OCI-LY7 (cell line): ENCODE measurements at regions of chr15 and their contacts with region 1.

Region 1: DNA sequence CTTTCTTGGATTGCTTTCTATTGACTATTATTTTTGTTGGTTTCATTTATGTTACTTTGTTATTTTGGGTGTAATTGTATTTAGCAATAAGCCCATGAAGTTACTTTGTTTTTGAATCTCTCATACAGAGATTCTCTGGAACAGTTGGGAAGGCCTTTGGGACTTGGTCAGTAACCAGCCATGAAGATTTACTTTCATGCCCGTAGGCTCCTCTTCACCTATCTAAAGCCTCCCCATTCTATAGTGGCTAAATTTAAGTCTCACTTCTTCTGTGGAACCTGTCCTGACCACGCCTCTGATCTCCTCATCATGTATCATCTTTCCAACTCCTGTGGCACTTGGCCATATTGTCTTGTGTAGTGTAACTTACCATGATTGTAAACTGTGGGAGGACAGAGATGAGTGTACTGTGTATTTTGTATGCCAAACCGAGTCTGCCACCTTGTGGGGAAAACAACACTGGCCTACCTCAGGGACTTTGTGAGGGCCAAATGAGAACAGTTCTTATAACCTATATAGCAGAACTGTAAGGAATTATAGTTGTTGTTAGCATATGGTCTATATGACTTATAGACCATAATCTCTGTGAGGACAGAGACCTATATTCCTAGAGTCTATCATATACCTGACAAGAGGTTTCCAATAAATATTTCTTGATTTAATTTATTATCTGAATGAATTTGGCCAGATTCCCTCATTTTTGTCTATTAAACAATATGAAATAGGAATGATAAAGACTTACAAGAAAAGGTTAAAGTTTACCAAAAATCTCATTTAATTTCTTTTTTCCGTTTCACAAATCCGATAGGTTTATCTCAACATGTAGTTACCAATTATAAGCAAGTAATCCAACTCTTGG is 75.0 kb downstream of the STARD9 start:
- DNase-seq: peak; percentile 80
- H3K4me3 ChIP-seq: no peak overlapping the region
- H3K27ac ChIP-seq: no peak overlapping the region
- H3K4me1 ChIP-seq: peaks cover 13% of the 10 kb centered on the region
- CTCF ChIP-seq: peak; percentile 97

Region 2: GRCh38 chr15:42474827-42475226 is 175.6 kb before region 1 on chr15:
- CTCF ChIA-PET with region 1: no interaction called
- POLR2A ChIA-PET with region 1: no interaction called
- intact Hi-C with region 1: loop called (anchors 5 kb)
- DNase-seq: no peak
- H3K4me3 ChIP-seq: no peak overlapping the region
- H3K27ac ChIP-seq: no peak overlapping the region
- H3K4me1 ChIP-seq: peaks cover 13% of the 10 kb centered on the region
- CTCF ChIP-seq: no peak

Region 3: DNA sequence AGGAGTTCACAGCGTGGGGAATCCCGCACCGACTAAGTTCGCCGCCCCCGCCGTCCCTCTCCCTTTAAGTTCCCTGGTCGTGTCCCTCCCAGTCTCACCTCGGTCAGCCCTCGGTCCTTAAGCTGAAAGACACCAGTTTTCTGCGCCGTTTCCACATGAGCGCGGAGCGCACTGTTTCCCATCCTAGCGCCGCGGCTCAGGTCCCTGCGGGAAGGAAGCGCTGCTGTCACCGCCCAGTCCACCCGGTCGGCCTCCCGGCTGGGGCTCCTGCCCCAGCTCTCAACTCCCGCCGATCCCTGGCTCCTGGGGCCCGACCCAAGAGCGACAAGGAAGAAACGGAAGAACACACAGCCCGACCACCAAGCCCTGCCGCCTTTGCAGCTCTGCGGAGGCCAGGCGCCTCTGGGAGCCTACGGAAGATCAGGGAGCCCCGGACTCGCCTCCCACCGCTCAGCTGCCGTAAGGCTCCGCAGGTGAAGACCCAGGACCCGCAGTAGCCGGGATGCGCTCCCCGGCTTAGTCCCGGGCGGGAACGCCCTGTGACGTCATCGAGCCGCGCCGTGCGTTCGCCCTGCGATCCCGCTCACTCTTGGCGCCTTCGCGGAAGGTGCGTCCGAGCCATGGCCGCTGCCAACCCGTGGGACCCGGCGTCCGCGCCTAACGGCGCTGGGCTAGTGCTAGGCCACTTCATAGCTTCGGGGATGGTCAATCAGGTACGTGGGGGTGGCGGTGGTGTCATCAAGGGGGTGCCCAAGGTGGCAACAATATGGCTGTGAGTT is 102.0 kb before region 1 on chr15 and contains the starts of genes HAUS2 and LRRC57:
- CTCF ChIA-PET with region 1: no interaction called
- POLR2A ChIA-PET with region 1: interaction called, 3 read pairs
- intact Hi-C with region 1: loop called (anchors 10 kb)
- DNase-seq: peak; percentile 90
- H3K4me3 ChIP-seq: peak within 1 kb of the TSS; percentile 98
- H3K27ac ChIP-seq: peak within 1 kb of the TSS; percentile 71
- H3K4me1 ChIP-seq: peaks cover 45% of the 10 kb centered on the region
- CTCF ChIP-seq: no peak
- total RNA-seq, gene HAUS2: 44.9 and 50.4 TPM in 2 replicates
- total RNA-seq, gene LRRC57: 17.9 and 18.5 TPM in 2 replicates

Region 4: DNA sequence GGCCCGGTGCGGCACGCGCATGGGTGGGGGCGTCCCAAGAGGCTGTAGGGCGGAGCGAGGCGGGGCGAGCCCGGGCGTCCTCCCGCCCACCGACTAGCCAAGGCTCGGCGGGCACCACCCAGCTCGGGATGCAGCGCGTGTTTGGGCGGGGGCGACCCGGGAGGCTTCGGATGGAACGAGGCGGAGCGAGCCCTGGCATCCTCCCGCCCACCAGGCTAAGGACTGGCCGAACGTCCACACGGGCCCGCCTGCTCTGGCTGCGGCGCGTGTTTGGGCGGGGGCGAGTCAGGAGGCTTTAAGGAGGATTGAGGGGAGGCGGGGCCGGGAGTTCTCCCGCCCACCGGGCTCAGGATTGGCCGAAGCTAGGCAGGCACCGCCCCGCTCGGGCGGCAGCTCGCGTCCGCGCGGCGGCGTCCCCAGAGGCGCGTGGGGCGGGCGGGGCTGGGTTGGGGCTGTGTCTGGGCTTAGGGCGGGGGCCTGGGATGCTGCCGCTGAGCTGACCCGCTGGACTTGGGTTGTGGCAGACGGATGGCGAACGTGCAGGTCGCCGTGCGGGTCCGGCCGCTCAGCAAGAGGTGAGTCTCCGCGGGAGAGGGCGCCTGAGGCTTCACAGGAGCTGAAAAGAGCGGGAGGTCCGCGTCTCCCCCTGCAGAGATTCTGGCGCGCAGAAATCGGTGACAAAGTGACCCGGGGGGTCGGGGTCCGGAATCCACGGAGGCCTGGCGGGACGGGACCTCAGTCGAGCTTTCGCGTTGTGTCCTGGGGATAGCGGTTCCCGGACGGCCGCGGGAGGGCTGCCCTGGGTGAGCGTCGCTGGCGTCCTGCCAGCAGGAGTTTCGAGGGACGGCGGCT is 75.0 kb before region 1 on chr15 and contains the start of gene STARD9:
- CTCF ChIA-PET with region 1: no interaction called
- POLR2A ChIA-PET with region 1: no interaction called
- intact Hi-C with region 1: loop called (anchors 5 kb)
- DNase-seq: peak; percentile 96
- H3K4me3 ChIP-seq: peak within 1 kb of the TSS; percentile 79
- H3K27ac ChIP-seq: peak within 1 kb of the TSS; percentile 1
- H3K4me1 ChIP-seq: peaks cover 33% of the 10 kb centered on the region
- CTCF ChIP-seq: no peak
- total RNA-seq, gene STARD9: 15.3 and 15.4 TPM in 2 replicates

Region 5: DNA sequence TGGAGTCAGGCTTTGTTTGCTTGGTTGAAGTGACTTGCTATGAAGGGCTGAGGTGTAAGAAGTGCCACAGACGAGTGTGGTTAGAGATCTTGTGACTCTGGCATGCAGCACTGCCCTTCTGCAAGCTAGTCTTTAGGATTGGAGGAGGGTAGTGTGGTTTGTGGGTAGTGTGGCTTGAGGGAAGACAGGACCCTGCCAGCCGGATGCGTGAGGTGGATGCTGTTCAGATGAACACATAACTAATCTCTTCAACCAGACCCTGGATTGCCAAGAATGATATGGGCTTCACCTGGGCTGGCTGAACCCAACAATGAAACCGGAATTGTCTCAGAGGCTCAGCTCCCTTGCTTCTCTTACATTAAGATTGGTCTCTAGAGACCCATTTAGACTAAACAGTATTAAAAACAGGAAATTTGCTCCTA is 42.3 kb before region 1 on chr15:
- CTCF ChIA-PET with region 1: no interaction called
- POLR2A ChIA-PET with region 1: no interaction called
- intact Hi-C with region 1: loop called (anchors 5 kb)
- DNase-seq: peak; percentile 69
- H3K4me3 ChIP-seq: peak overlapping the region; percentile 8
- H3K27ac ChIP-seq: peak overlapping the region; percentile 83
- H3K4me1 ChIP-seq: peaks cover 63% of the 10 kb centered on the region
- CTCF ChIP-seq: no peak